Endothelial cell of umbilical vein (primary cell): ENCODE measurements at regions of chr11 and their contacts with region 1.

Region 1: DNA sequence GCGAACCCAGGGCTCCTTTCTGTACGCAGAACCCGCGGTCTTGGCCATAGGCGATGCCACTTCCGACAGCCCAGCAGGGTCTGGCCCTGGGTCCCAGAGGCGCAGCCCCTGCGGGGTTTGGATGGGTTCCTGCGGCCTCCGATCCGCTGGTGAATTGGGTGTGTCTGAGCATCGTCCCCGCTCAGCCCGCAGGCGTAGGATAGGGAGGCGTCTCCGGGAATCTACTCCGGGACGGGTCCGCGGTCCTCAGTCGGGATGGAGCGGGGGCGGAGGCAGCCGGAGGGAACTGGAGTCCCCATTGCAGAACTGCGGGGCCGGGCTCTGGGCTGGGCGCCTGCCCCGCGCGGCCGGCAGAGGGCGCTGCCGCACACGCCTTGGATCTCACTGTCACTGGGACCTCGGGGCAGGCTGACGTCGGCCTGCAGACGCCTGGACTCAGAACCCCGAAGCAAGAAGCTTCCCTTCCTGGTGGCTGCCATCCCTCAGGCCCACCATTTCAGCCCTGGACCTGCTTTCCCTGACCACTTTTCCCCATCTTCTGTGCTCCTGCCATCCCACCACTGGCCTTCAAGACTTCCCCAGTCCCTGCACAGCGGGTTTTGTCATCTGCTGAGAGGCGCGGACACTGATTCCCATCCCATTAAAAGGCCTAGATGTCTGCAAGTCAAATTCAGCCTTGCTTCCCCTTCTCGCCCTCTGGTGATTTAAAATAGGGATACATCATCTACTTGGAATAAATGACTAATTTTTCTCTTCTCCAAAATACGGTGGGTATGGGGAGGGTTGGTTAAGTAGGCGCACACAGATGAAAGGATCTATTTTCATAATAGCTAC is 38.3 kb upstream of the CREB3L1 start:
- DNase-seq: peak; percentile 87
- H3K4me3 ChIP-seq: peak overlapping the region; percentile 25 to 64 (median 39)
- H3K27ac ChIP-seq: peak overlapping the region; percentile 86
- H3K4me1 ChIP-seq: peaks cover 30% of the 10 kb centered on the region
- H3K27me3 ChIP-seq: peaks cover 0 to under 1% of the 10 kb centered on the region in 2 experiments
- CTCF ChIP-seq: peak; percentile 98 to 99
- POLR2A ChIP-seq: no peak

Region 2: GRCh38 chr11:45964911-45965389 is 274.2 kb before region 1 on chr11:
- CTCF ChIA-PET with region 1: interaction called, 11 read pairs
- POLR2A ChIA-PET with region 1: no interaction called
- dilution Hi-C with region 1: no loop called
- intact Hi-C with region 1: loop called (anchors 2 kb)
- DNase-seq: peak; percentile 86
- H3K4me3 ChIP-seq: no peak overlapping the region
- H3K27ac ChIP-seq: no peak overlapping the region
- H3K4me1 ChIP-seq: no peaks in the 10 kb centered on the region
- H3K27me3 ChIP-seq: no peaks in the 10 kb centered on the region
- CTCF ChIP-seq: peak; percentile 87 to 88
- POLR2A ChIP-seq: no peak

Region 3: DNA sequence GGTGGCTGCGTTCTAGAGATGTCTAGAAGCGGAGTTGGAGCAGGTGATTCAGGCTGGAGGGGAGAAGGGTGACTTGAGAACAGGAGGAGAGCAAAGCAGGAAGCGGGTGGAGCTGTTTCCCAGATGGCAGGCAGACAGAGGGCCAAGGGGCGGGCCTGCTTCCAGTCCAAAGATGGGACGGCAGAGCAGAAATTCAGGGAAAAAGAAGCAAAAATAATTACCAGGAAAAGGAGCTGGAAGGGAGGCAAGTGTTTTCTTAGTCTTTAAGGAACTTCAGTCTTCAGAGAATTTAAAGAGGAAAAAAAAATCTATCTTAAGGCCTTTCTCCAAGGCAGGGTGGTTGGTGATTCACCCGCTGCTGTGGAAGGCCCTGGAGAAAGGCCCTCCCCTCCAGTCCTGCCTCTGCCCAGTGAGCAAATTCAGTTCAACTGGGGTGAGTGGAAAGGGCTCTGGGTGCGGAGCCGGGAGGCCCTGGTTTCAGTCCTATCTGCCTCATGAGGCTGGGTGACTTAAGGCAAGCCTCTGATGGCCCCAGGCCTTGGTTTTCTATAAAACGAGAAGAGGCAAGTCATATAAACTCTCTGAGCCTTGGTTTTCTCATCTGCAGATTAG is 33.7 kb after region 1 on chr11:
- CTCF ChIA-PET with region 1: interaction called, 14 read pairs
- POLR2A ChIA-PET with region 1: interaction called, 3 read pairs
- dilution Hi-C with region 1: no loop called
- intact Hi-C with region 1: no loop called
- DNase-seq: peak; percentile 43
- H3K4me3 ChIP-seq: no peak overlapping the region
- H3K27ac ChIP-seq: no peak overlapping the region
- H3K4me1 ChIP-seq: peaks cover 10% of the 10 kb centered on the region
- H3K27me3 ChIP-seq: peaks cover 9 to 10% of the 10 kb centered on the region in 2 experiments
- CTCF ChIP-seq: no peak
- POLR2A ChIP-seq: no peak

Region 4: DNA sequence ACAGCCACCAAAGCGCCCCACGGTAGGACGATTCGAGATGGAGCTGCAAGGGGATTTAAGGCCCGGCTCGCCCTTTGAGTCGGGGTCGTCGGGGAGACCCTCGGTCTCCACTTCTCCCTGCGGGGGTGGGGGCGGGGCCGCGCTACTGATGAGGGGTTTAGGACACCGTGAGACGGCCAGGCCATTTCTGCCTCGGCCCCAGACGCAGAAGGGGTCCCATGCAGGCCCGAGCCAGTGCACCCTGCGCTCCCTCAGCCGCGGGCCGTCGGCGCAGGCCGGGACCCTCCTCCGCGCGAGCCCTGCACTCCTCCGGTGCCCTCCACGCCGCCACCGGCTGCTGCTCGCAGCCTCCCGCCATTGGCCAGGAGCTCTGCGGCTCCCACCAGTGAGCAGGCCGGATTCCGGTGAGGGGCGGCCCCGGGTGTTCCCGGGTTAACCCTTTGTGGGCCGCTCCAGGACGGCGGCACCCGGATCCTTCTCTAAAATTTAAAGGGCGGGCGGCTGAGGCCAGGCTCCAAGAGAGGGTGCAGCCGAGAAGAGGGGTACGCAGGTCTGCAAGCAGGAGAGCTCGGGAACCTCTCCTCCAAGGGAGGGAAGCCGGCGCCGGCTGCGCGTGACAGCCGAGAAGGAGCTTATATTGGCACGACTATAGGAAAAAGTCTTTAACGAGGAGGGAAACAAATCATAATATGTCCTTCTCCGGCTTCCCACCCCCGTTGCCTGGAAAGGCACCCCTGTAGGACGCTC is 56.3 kb after region 1 on chr11:
- CTCF ChIA-PET with region 1: interaction called, 59 read pairs
- POLR2A ChIA-PET with region 1: interaction called, 8 read pairs
- dilution Hi-C with region 1: no loop called
- intact Hi-C with region 1: loop called (anchors 1 kb)
- DNase-seq: peak; percentile 76
- H3K4me3 ChIP-seq: peak overlapping the region; percentile 33 to 78 (median 74)
- H3K27ac ChIP-seq: no peak overlapping the region
- H3K4me1 ChIP-seq: peaks cover 19% of the 10 kb centered on the region
- H3K27me3 ChIP-seq: peaks cover 0 to 2% of the 10 kb centered on the region in 2 experiments
- CTCF ChIP-seq: no peak
- POLR2A ChIP-seq: no peak

Region 5: GRCh38 chr11:46315033-46315738 is 76.0 kb after region 1 on chr11:
- CTCF ChIA-PET with region 1: interaction called, 367 read pairs
- POLR2A ChIA-PET with region 1: no interaction called
- dilution Hi-C with region 1: no loop called
- intact Hi-C with region 1: loop called (anchors 1 kb)
- DNase-seq: peak; percentile 72
- H3K4me3 ChIP-seq: no peak overlapping the region
- H3K27ac ChIP-seq: no peak overlapping the region
- H3K4me1 ChIP-seq: peaks cover 8% of the 10 kb centered on the region
- H3K27me3 ChIP-seq: no peaks in the 10 kb centered on the region
- CTCF ChIP-seq: peak; percentile 76 to 86
- POLR2A ChIP-seq: no peak

Region 6: DNA sequence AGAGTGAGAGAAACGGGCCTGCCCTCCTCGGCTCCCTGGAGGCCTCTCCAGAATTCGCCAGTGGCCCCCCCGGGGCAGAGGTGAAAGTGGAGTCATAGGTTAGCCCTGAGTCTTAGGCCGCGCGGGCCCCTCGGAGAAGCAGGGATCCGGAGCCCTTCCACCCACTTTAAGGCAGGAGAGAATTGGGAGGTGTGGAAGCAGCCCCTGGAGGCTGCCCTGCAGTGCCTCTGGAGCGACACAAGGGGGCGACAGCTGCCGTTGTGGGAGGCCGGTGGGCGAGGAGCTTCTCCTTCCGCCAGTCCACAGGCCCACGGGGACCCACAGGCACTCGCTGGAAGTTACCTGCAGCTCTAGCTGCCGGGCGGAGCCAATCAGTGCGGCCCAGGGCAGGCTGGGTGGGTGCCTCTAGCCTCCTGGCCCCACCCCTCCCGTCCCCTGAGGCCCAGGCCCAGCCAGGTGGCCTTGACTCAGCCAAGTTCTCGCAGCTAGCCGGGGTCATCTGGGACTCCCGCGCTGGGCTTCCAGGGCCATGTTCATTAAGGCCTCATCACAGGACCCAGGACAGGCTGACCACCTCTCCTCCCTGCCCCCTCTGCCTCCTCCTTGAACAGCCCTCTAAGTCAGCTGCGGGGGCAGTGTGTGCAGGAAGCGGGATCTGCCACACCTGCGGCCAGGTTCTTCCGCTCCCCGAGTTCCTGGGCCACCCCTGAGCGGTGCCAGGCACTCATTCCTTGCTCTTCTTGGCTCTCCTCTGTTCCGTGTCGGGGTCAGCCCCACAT is 113.1 kb after region 1 on chr11:
- CTCF ChIA-PET with region 1: interaction called, 10 read pairs
- POLR2A ChIA-PET with region 1: interaction called, 3 read pairs
- dilution Hi-C with region 1: no loop called
- intact Hi-C with region 1: no loop called
- DNase-seq: peak; percentile 30
- H3K4me3 ChIP-seq: no peak overlapping the region
- H3K27ac ChIP-seq: no peak overlapping the region
- H3K4me1 ChIP-seq: peaks cover 13% of the 10 kb centered on the region
- H3K27me3 ChIP-seq: no peaks in the 10 kb centered on the region
- CTCF ChIP-seq: peak; percentile 89 to 93
- POLR2A ChIP-seq: no peak

Region 7: GRCh38 chr11:46378811-46379481 is 139.8 kb after region 1 on chr11:
- CTCF ChIA-PET with region 1: no interaction called
- POLR2A ChIA-PET with region 1: no interaction called
- dilution Hi-C with region 1: no loop called
- intact Hi-C with region 1: no loop called
- DNase-seq: no peak
- H3K4me3 ChIP-seq: no peak overlapping the region
- H3K27ac ChIP-seq: no peak overlapping the region
- H3K4me1 ChIP-seq: peaks cover 11% of the 10 kb centered on the region
- H3K27me3 ChIP-seq: no peaks in the 10 kb centered on the region
- CTCF ChIP-seq: no peak
- POLR2A ChIP-seq: no peak

Region 8: GRCh38 chr11:46414466-46414796 is 175.2 kb after region 1 on chr11:
- CTCF ChIA-PET with region 1: no interaction called
- POLR2A ChIA-PET with region 1: no interaction called
- dilution Hi-C with region 1: no loop called
- intact Hi-C with region 1: no loop called
- DNase-seq: no peak
- H3K4me3 ChIP-seq: no peak overlapping the region
- H3K27ac ChIP-seq: no peak overlapping the region
- H3K4me1 ChIP-seq: no peaks in the 10 kb centered on the region
- H3K27me3 ChIP-seq: no peaks in the 10 kb centered on the region
- CTCF ChIP-seq: no peak
- POLR2A ChIP-seq: no peak

Region 9: DNA sequence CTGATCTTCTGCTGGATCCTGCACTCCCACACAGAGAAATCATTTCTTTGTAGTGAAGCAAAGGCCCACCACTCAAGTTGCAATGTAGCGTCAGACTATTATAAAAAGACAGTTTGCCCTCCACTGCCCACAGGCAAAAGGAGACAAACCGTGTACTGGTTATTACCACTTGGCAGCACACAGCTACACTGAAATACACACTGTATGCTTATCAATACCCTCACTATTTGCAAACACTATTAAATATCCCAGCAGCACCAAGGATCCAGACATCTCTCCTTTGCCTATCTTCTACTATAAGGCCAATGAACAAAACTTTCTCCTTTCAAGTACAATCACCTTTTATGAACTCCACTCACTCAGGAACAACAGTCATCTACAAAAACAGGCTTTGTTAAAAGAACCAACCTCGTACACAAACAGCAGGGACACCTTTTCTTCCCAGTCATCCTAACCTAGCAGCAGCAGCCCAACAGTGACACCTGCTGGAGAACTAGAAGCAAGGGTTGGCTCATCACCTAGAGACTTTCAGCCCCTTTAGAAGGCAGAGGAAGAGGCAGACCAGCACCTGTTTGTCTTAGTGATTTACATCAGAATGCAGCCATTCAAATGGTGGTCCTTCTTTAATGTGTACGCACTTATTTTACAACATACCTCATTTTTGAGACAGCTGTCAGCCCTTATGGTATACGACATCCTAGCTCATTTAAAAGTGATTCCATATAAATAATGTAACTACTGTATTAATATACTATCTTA is 298.5 kb after region 1 on chr11:
- CTCF ChIA-PET with region 1: no interaction called
- POLR2A ChIA-PET with region 1: no interaction called
- dilution Hi-C with region 1: no loop called
- intact Hi-C with region 1: loop called (anchors 2 kb)
- DNase-seq: peak; percentile 75
- H3K4me3 ChIP-seq: no peak overlapping the region
- H3K27ac ChIP-seq: no peak overlapping the region
- H3K4me1 ChIP-seq: no peaks in the 10 kb centered on the region
- H3K27me3 ChIP-seq: no peaks in the 10 kb centered on the region
- CTCF ChIP-seq: peak; percentile 88 to 91
- POLR2A ChIP-seq: no peak